Astrocyte of the cerebellum (primary cell): ENCODE measurements at regions of chr17 and their contacts with region 1.

Region 1: GRCh38 chr17:73068322-73069153 is 23.9 kb downstream of the SLC39A11 start:
- DNase-seq: peak; percentile 79
- H3K4me3 ChIP-seq: no peak overlapping the region
- CTCF ChIP-seq: no peak

Region 2: DNA sequence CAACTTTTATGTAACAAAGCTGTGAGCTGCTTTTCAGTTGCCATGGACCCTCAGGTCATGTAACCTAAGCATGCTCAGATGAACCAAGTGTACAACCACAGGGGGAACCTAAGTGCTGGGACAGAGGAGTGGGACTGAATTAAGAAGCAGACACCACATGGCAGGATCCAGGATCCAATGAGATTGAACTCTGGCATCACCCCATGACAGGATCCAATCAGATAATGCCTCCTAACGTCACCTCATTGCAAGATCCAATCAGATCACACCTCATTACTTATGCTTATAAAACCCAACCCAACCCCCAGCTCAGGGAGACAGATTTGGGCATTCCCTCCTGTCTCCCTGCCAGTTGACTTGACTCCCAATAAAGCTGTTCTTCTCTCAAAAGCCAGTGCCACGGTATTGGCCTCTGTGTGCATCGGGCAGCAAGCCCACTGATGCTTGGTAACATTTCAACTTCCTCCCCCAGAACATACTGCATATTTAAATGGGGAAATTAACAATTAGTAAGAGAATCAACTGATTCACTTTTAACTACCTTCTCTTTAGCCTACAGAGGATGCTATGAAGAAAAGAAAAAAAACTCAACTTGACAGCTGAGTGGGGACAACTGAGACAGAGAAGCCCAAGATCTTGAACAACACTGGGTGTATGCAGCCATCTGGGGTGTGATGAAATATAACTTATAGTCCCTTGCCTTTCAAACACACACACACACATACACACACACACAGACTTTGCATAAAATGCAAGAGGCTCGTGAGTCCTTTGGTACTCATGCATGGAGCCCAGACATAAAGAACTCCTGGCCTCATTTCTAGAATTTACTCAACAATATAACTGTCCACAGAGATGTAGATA is 124.5 kb before region 1 on chr17:
- in situ Hi-C with region 1: no loop called
- DNase-seq: no peak
- H3K4me3 ChIP-seq: no peak overlapping the region
- CTCF ChIP-seq: no peak

Region 3: GRCh38 chr17:72985881-72986720 is 82.4 kb before region 1 on chr17:
- in situ Hi-C with region 1: loop called (anchors 10 kb)
- DNase-seq: peak; percentile 67
- H3K4me3 ChIP-seq: no peak overlapping the region
- CTCF ChIP-seq: peak; percentile 89

Region 4: DNA sequence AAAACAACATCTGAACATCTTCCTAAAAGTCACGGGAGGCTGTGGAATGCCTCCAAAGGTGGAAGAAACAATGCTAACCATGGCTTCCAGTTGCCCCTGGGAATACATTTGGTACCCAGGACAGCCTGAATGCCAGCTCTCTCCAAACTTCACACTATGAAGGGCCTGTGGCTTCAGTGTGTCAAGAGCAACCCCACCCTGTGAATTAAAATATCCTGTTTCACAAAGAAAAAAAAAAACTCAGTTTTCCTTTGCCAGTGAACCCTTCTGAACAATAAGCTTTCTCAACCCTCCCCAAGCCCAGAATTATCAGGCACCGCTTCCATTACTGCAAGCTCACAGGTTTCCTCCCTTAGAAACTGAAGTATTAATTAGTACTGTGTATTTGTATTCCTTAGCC is 45.8 kb before region 1 on chr17:
- in situ Hi-C with region 1: loop called (anchors 5 kb)
- DNase-seq: no peak
- H3K4me3 ChIP-seq: no peak overlapping the region
- CTCF ChIP-seq: no peak